ENCODE measurements at regions of chr10 and their contacts with region 1.

Region 1: GRCh38 chr10:13776861-13777311 is 190.1 kb downstream of the PRPF18 start:
- DNase-seq: no peak
- CTCF ChIP-seq: no peak

Region 2: DNA sequence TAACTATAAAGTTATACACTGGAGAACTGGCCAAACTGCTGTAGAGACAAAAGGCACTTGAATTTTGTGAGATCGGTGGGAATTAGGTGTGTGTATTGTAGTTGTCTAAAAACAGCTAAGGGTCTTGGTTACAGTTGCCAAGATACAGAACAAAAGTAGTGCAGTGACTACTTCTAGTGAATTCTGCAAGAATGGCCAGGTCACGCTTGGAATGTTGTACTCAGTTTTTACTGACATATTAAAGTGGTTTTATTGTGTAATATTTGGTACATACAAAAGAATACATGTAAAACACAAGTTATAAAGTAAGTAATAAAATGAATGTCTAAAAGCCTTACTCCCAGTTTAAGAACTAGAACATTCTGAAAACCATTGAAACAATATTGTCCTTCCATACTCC is 147.8 kb before region 1 on chr10:
- in situ Hi-C with region 1: no loop called
- DNase-seq: no peak
- CTCF ChIP-seq: no peak

Region 3: DNA sequence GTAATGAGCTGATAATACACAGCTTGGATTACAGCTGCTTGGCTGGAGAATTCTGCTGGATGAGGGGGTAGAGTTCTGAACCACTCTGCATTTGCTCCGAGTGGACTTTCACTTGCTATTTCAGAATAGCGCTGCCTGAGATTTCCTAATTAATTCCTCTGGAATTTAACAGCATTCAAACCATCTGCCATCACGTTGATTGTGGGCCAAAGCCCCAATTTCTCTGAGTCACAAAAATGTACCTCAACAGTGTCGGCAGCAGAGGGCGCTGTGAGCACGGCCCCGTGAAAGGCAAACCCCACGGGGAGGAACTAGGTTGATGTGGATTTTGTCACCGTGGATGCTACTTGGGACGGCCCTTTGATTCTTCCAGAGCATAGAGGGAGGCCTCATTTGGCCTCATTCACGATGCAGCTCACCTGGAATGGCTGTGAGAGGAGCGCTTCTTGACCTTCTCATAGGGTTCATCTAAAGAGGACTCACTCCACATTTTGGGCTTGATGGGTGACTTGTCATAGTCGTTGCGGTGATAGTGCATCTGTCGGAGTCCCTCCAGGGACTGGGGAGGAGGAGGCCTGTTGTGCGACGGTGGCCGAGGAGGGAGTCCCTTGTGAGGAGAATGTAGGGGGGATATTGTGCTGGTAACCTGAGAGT is 116.9 kb before region 1 on chr10:
- in situ Hi-C with region 1: loop called (anchors 10 kb)
- DNase-seq: peak; percentile 85
- CTCF ChIP-seq: peak; percentile 89